ENCODE measurements at regions of chr7 and their contacts with region 1.

Region 1: DNA sequence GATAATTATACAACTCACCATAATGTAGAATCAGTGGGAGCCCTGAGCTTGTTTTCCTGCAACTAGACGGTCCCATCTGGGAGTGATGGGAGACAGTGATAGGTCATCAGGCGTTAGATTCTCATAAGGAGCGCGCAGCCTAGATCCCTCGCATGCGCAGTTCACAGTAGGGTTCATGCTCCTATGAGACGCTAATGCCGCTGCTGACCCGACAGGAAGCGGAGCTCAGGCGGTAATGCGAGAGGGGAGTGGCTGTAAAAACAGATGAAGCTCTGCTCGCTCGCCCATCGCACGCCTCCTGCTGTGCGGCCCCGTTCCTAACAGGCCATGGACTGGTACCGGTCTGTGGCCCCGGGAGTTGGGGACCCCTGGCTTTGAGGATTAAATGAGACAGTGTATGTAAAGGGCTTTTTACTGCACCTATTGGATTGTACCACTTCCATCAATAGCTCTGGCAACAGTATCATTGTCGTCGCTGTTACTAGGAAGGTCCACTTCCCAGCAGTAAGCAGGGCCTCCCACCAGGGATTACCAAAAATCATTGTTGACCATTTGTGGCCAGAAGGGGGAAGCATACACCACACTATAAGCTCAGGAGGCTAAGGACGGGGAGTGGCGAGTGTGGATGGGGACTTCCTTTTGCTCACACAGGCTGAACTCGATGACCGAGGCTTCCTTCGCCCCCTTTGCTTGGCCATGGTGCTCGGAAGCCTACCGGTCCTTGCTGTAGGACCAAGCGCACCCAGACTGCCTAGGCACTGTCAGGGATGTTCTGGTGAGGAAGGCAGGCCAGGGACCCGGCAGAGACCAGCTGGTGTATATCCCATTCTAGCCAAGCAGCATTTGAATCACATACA is 26.4 kb downstream of the AKR1B1 start:
- DNase-seq: peak; percentile 95
- H3K4me3 ChIP-seq: peak overlapping the region; percentile 25 to 44 (median 37)
- H3K27ac ChIP-seq: peak overlapping the region; percentile 77 to 88 (median 83)
- H3K4me1 ChIP-seq: peaks cover 0 to 10% (median 6%) of the 10 kb centered on the region in 4 donors
- H3K27me3 ChIP-seq: no peaks in the 10 kb centered on the region
- CTCF ChIP-seq: peak; percentile 70 to 86 (median 80)
- EP300 ChIP-seq: no peak
- POLR2A ChIP-seq: no peak

Region 2: DNA sequence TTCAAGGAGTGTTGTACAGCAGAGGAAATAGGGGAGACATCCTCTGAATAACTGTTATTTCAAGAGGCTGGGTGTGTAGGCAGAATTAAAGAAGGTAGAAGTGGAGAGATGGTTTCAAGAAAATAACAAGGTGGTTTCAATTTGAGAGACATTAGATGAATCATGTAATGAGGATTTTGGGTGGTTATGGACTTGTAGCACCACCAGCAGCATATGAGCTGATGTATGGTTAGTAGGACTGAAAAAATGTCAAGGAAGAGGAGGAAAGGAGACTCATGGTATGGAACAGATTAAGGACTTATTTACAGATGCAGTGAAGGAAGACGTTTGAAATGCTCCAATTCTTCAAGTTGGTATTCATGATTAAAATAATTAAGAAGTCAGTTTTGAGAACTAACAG is 1013.5 kb before region 1 on chr7:
- intact Hi-C with region 1: no loop called
- DNase-seq: no peak
- H3K4me3 ChIP-seq: no peak overlapping the region
- H3K27ac ChIP-seq: no peak overlapping the region
- H3K4me1 ChIP-seq: no peaks in the 10 kb centered on the region
- H3K27me3 ChIP-seq: no peaks in the 10 kb centered on the region
- CTCF ChIP-seq: no peak
- EP300 ChIP-seq: no peak
- POLR2A ChIP-seq: no peak

Region 3: GRCh38 chr7:134368851-134369552 is 63.5 kb before region 1 on chr7:
- intact Hi-C with region 1: no loop called
- DNase-seq: no peak
- H3K4me3 ChIP-seq: no peak overlapping the region
- H3K27ac ChIP-seq: no peak overlapping the region
- H3K4me1 ChIP-seq: no peaks in the 10 kb centered on the region
- H3K27me3 ChIP-seq: peaks cover 0 to 4% (median 0%) of the 10 kb centered on the region in 3 donors
- CTCF ChIP-seq: no peak
- EP300 ChIP-seq: no peak
- POLR2A ChIP-seq: no peak

Region 4: GRCh38 chr7:134514663-134515062 is 82.1 kb after region 1 on chr7:
- intact Hi-C with region 1: loop called (anchors 2 kb)
- DNase-seq: no peak
- H3K4me3 ChIP-seq: no peak overlapping the region
- H3K27ac ChIP-seq: no peak overlapping the region
- H3K4me1 ChIP-seq: peaks cover 0 to 6% (median 0%) of the 10 kb centered on the region in 4 donors
- H3K27me3 ChIP-seq: no peaks in the 10 kb centered on the region
- CTCF ChIP-seq: peak; percentile 49 to 84 (median 80)
- EP300 ChIP-seq: no peak
- POLR2A ChIP-seq: no peak

Region 5: DNA sequence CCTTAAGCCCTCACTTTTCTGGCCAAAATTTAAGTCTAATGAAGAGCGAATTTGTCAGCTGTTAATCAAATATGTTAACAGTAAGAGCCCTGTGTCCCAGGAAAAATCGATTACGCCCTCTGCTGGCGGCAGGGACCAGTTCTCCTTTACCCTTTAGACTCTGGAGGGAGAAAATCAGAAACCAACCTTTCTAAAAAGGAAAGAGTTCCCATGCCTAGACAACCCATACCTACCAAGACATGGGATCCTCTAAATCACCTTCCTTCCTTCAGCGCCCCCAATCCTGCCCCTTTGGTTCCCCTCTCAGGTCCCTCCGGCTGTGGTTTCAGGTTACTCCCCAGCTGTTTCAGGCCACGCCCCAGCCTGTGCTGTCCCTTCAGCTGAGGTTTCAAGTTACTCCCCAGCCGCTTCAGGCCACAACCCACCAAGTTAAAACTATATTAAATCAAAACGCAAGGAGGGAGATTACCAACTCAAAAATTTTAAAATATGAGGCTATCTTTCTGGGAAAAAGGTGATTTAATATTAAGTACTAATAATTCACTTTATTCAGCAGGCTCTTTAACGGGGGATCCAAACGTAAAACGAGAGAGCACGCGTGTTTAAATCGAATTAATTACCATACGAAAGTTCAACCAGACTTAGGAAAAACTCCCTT is 115.0 kb after region 1 on chr7:
- intact Hi-C with region 1: loop called (anchors 1 kb)
- DNase-seq: peak; percentile 87
- H3K4me3 ChIP-seq: peak overlapping the region in 3 of 4 donors; percentile 37 to 42 (median 42)
- H3K27ac ChIP-seq: peak overlapping the region in 3 of 4 donors; percentile 6 to 53 (median 48)
- H3K4me1 ChIP-seq: peaks cover 0 to 12% (median 0%) of the 10 kb centered on the region in 4 donors
- H3K27me3 ChIP-seq: no peaks in the 10 kb centered on the region
- CTCF ChIP-seq: peak; percentile 42 to 83 (median 80)
- EP300 ChIP-seq: no peak
- POLR2A ChIP-seq: no peak

Measured in sigmoid colon (tissue), 7 donors.